Caco-2 (cell line): ENCODE measurements at regions of chr17 and their contacts with region 1.

Region 1: GRCh38 chr17:29771551-29771950 is 148.8 kb upstream of the CORO6 start:
- DNase-seq: no peak
- H3K4me3 ChIP-seq: no peak overlapping the region
- H3K4me3 Mint-ChIP-seq: no peak overlapping the region
- H3K27ac Mint-ChIP-seq: no peak overlapping the region
- H3K4me1 ChIP-seq: peaks cover 10% of the 10 kb centered on the region
- H3K4me1 Mint-ChIP-seq: no peaks in the 10 kb centered on the region
- H3K27me3 ChIP-seq: no peaks in the 10 kb centered on the region
- H3K27me3 Mint-ChIP-seq: no peaks in the 10 kb centered on the region
- CTCF ChIP-seq: no peak

Region 2: GRCh38 chr17:29722411-29723198 is 48.9 kb before region 1 on chr17:
- CTCF ChIA-PET with region 1: no interaction called
- POLR2A ChIA-PET with region 1: no interaction called
- intact Hi-C with region 1: loop called (anchors 10 kb)
- DNase-seq: peak in 1 of 2 experiments; percentile 32
- H3K4me3 ChIP-seq: no peak overlapping the region
- H3K4me3 Mint-ChIP-seq: no peak overlapping the region
- H3K27ac Mint-ChIP-seq: peak overlapping the region; percentile 37
- H3K4me1 ChIP-seq: peaks cover 50% of the 10 kb centered on the region
- H3K4me1 Mint-ChIP-seq: peaks cover 46% of the 10 kb centered on the region
- H3K27me3 ChIP-seq: no peaks in the 10 kb centered on the region
- H3K27me3 Mint-ChIP-seq: no peaks in the 10 kb centered on the region
- CTCF ChIP-seq: no peak